Calu3 (cell line): ENCODE measurements at regions of chr11 and their contacts with region 1.

Region 1: DNA sequence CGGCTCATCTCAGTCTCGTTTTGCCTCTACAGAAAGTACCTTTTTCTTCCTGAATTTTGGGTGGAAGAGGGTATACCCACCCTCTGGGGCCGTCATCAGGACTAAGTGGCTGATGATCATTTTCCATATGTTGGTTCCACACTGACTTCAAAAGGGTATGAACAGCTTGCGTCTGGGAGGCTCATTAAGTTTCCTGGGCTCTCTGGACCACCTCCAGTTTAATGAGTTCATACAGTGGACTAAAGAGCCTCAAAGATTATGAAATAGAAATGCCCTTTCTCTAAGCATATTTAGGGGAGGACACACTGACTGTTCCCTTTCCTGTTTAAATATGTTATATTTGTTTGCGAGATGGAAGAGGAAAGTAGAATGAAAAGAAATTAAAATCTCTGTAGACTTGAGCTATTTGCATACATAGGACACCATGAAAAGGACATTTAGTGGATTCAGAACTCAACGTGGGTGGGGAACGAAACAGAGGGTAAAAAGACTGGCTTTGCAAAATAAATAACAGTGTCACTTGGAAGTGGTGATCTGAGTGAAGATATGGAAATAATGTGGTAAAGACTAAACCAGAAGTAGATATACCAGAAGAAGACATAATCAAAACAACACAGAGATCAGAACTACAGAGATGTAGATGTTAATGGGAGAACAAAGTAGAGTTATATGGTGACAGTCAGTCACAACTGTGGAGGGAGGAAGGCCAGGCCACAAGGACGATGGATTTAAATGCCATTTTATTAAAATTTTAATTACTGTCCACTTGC is 18.7 kb downstream of the LDLRAD3 start:
- DNase-seq: no peak
- H3K4me3 Mint-ChIP-seq: no peak overlapping the region
- H3K27ac Mint-ChIP-seq: no peak overlapping the region
- H3K4me1 Mint-ChIP-seq: no peaks in the 10 kb centered on the region
- H3K27me3 Mint-ChIP-seq: no peaks in the 10 kb centered on the region
- CTCF ChIP-seq: no peak

Region 2: GRCh38 chr11:36009473-36009872 is 46.9 kb after region 1 on chr11:
- CTCF ChIA-PET with region 1: no interaction called
- intact Hi-C with region 1: no loop called
- DNase-seq: no peak
- H3K4me3 Mint-ChIP-seq: no peak overlapping the region
- H3K27ac Mint-ChIP-seq: peak overlapping the region; percentile 40
- H3K4me1 Mint-ChIP-seq: peaks cover 31% of the 10 kb centered on the region
- H3K27me3 Mint-ChIP-seq: no peaks in the 10 kb centered on the region
- CTCF ChIP-seq: no peak

Region 3: DNA sequence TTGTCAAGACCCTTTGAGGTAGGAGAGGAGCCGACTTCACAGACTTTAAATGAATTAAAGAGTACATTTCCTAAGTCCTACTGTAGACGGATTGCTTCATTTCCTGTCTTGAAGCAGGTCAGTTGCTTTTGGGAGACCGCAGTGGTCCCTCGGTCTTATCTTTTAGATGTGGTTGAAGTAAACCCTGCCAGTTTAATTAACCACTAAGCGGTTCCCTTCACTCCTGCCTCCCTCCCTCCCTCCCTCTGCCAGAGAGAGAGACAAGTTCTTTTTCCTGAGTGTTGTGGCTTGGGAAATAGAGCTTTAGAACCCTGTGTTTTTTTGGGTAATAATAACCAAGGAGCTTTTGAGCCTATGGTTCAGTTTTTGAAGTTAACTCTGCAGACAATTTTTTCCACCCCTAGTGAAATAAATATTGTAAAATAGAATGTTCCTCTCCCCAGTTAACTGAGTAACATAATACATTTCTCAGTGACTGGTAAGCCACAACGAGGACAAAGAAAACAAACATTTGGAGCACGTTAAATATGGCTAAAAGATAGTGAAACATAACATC is 128.8 kb after region 1 on chr11:
- CTCF ChIA-PET with region 1: interaction called, 10 read pairs
- intact Hi-C with region 1: no loop called
- DNase-seq: no peak
- H3K4me3 Mint-ChIP-seq: no peak overlapping the region
- H3K27ac Mint-ChIP-seq: no peak overlapping the region
- H3K4me1 Mint-ChIP-seq: no peaks in the 10 kb centered on the region
- H3K27me3 Mint-ChIP-seq: no peaks in the 10 kb centered on the region
- CTCF ChIP-seq: no peak